Testis (tissue), 5 donors: ENCODE measurements at regions of chr10 and their contacts with region 1.

Region 1: GRCh38 chr10:98474628-98475027 is 27.9 kb upstream of the HPS1 start:
- DNase-seq: no peak
- H3K4me3 ChIP-seq: no peak overlapping the region
- H3K27ac ChIP-seq: no peak overlapping the region
- H3K4me1 ChIP-seq: no peaks in the 10 kb centered on the region
- H3K27me3 ChIP-seq: no peaks in the 10 kb centered on the region
- CTCF ChIP-seq: no peak
- POLR2A ChIP-seq: no peak

Region 2: DNA sequence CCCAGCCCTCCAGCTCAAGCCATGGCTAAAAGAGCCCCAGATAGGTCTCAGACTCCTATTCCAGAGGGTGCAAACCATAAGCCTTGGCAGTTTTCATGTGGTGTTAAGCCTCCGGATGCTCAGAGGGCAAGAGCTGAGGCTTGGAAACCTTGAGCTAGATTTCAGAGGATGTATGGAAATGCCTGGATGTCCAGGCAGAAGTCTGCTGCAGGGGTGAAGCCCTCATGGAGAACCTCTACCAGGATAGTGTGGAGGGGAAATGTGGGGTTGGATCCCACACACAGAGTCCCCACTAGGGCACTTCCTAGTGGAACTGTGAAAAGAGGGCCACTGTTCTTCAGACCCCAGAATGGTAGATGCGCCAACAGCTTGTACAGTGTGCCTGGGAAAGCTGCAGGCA is 774.2 kb after region 1 on chr10:
- intact Hi-C with region 1: loop called (anchors 10 kb)
- DNase-seq: no peak
- H3K4me3 ChIP-seq: no peak overlapping the region
- H3K27ac ChIP-seq: no peak overlapping the region
- H3K4me1 ChIP-seq: no peaks in the 10 kb centered on the region
- H3K27me3 ChIP-seq: no peaks in the 10 kb centered on the region
- CTCF ChIP-seq: no peak
- POLR2A ChIP-seq: no peak